ENCODE measurements at regions of chr15 and their contacts with region 1.

Region 1: DNA sequence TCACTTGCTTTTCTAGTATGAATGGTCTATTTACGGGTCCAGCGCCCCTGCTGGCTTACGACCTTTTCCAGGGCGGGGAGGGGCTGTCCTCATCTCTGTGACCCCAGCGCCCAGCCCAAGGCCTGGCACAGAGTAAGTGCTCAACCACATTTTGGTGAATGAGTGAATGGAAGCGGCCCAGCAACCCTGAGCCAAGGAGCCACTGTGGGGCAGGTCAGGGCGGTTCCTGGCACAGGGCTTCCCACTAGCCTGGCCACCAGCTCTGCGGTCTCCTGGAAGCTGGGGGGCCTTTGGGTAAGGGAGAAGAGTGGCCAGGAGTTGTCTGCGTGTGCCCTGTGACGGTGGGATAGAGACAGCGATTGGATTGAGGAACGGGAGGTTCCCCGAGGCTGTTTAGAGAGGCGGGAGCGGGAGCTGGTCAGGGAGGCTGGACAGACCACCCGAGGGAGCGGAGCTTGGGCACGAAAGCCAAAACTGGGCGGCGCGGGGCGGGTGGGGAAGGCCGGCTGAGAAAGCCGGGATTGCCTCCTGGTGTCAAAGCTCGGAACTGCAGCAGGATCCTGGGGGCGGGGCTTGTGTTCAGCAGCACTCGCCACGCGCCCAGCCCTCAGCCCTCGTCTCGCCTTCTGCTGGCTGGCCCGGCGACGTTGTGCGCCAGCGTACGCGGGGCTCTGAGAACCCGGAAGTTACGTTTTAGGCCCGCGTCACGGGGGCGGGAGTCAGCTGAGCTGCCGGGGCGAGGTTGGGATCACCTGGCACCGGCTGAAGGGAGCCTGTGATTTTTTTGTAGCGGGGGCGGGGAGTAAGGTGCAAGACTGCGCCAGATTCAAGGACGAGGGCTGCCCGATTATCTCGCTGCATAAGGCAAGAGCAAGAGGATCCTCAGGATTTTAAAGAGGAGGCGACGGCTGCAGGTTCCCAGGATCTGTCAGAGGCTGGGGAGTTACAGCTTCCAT is at the start of gene VPS18:
- DNase-seq: peak; percentile 99
- ATAC-seq: peak; percentile 92
- H3K4me3 ChIP-seq: peak within 1 kb of the TSS; percentile 87
- H3K27ac ChIP-seq: peak within 1 kb of the TSS; percentile 81
- H3K4me1 ChIP-seq: peaks cover 16% of the 10 kb centered on the region
- H3K27me3 ChIP-seq: no peaks in the 10 kb centered on the region
- CTCF ChIP-seq: peak; percentile 74
- total RNA-seq, gene VPS18: 37.6 and 39.5 TPM in 2 replicates

Region 2: GRCh38 chr15:40593588-40594428 is 300.2 kb before region 1 on chr15 and contains the start of gene KNL1:
- CTCF ChIA-PET with region 1: no interaction called
- POLR2A ChIA-PET with region 1: no interaction called
- intact Hi-C with region 1: loop called (anchors 10 kb)
- DNase-seq: peak; percentile 97
- ATAC-seq: peak; percentile 74
- H3K4me3 ChIP-seq: peak within 1 kb of the TSS; percentile 98
- H3K27ac ChIP-seq: peak within 1 kb of the TSS; percentile 85
- H3K4me1 ChIP-seq: peaks cover 17% of the 10 kb centered on the region; the same call in 1 of the 2 replicates
- H3K27me3 ChIP-seq: no peaks in the 10 kb centered on the region
- CTCF ChIP-seq: no peak
- total RNA-seq, gene KNL1: 33.5 and 33.8 TPM in 2 replicates

Region 3: GRCh38 chr15:40694688-40695468 is 199.1 kb before region 1 on chr15 and contains the start of gene RAD51:
- CTCF ChIA-PET with region 1: interaction called, 11 read pairs
- POLR2A ChIA-PET with region 1: no interaction called
- intact Hi-C with region 1: no loop called
- DNase-seq: peak; percentile 94
- ATAC-seq: peak; percentile 90
- H3K4me3 ChIP-seq: peak within 1 kb of the TSS; percentile 77
- H3K27ac ChIP-seq: peak within 1 kb of the TSS; percentile 90
- H3K4me1 ChIP-seq: peaks cover 10% of the 10 kb centered on the region; the same call in 1 of the 2 replicates
- H3K27me3 ChIP-seq: no peaks in the 10 kb centered on the region
- CTCF ChIP-seq: no peak
- total RNA-seq, gene RAD51: 17.3 and 21.9 TPM in 2 replicates

Region 4: GRCh38 chr15:40776522-40777137 is 117.4 kb before region 1 on chr15:
- CTCF ChIA-PET with region 1: interaction called, 10 read pairs
- POLR2A ChIA-PET with region 1: no interaction called
- intact Hi-C with region 1: no loop called
- DNase-seq: peak; percentile 93
- ATAC-seq: peak; percentile 100
- H3K4me3 ChIP-seq: no peak overlapping the region
- H3K27ac ChIP-seq: peak overlapping the region; percentile 66
- H3K4me1 ChIP-seq: peaks cover 17% of the 10 kb centered on the region
- H3K27me3 ChIP-seq: no peaks in the 10 kb centered on the region
- CTCF ChIP-seq: no peak

Region 5: GRCh38 chr15:40857601-40858341 is 36.2 kb before region 1 on chr15:
- CTCF ChIA-PET with region 1: interaction called, 80 read pairs
- POLR2A ChIA-PET with region 1: interaction called, 3 read pairs
- intact Hi-C with region 1: loop called (anchors 1 kb)
- DNase-seq: peak; percentile 97
- ATAC-seq: peak; percentile 77
- H3K4me3 ChIP-seq: no peak overlapping the region
- H3K27ac ChIP-seq: peak overlapping the region; percentile 94
- H3K4me1 ChIP-seq: peaks cover 39% of the 10 kb centered on the region
- H3K27me3 ChIP-seq: no peaks in the 10 kb centered on the region
- CTCF ChIP-seq: peak; percentile 96

Region 6: GRCh38 chr15:40928821-40929659 is 35.0 kb after region 1 on chr15 and contains the start of gene DLL4:
- CTCF ChIA-PET with region 1: no interaction called
- POLR2A ChIA-PET with region 1: no interaction called
- intact Hi-C with region 1: no loop called
- DNase-seq: peak; percentile 77
- ATAC-seq: peak; percentile 49
- H3K4me3 ChIP-seq: peak within 1 kb of the TSS; percentile 76
- H3K27ac ChIP-seq: no peak within 1 kb of the TSS
- H3K4me1 ChIP-seq: peaks cover 45% of the 10 kb centered on the region
- H3K27me3 ChIP-seq: peaks cover 25% of the 10 kb centered on the region
- CTCF ChIP-seq: no peak
- total RNA-seq, gene DLL4: 2.2 and 2.9 TPM in 2 replicates

Region 7: DNA sequence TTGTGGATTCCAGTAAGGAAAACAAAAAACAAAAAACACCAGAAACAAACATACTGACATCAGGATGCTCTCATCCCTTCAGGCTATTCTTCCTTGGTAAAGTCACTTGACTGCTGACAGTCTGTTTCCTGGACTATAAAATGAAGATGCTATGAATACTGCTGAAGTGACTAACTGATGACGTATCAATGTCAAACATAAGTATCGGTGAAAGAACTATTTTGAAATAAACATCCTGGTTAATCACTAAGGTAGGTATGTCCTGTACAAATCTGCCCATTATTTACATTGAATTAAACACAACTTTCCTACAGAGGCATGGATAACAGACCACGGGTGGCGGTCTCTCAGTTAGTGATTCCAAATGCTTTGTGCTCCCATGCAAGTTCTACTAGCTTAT is 105.2 kb after region 1 on chr15:
- CTCF ChIA-PET with region 1: no interaction called
- POLR2A ChIA-PET with region 1: no interaction called
- intact Hi-C with region 1: no loop called
- DNase-seq: peak; percentile 96
- ATAC-seq: peak; percentile 84
- H3K4me3 ChIP-seq: 0 out of 2 replicates have a peak overlapping the region, but pooled peaks have one; percentile 4
- H3K27ac ChIP-seq: peak overlapping the region; percentile 95
- H3K4me1 ChIP-seq: peaks cover 43% of the 10 kb centered on the region
- H3K27me3 ChIP-seq: no peaks in the 10 kb centered on the region
- CTCF ChIP-seq: no peak

Region 8: GRCh38 chr15:41354371-41354770 is 460.4 kb after region 1 on chr15:
- CTCF ChIA-PET with region 1: no interaction called
- POLR2A ChIA-PET with region 1: no interaction called
- intact Hi-C with region 1: no loop called
- DNase-seq: no peak
- ATAC-seq: no peak
- H3K4me3 ChIP-seq: no peak overlapping the region
- H3K27ac ChIP-seq: no peak overlapping the region
- H3K4me1 ChIP-seq: no peaks in the 10 kb centered on the region
- H3K27me3 ChIP-seq: no peaks in the 10 kb centered on the region
- CTCF ChIP-seq: no peak

Region 9: GRCh38 chr15:42171122-42171521 is 1277.1 kb after region 1 on chr15:
- CTCF ChIA-PET with region 1: no interaction called
- POLR2A ChIA-PET with region 1: no interaction called
- intact Hi-C with region 1: no loop called
- DNase-seq: no peak
- ATAC-seq: no peak
- H3K4me3 ChIP-seq: no peak overlapping the region
- H3K27ac ChIP-seq: no peak overlapping the region
- H3K4me1 ChIP-seq: no peaks in the 10 kb centered on the region
- H3K27me3 ChIP-seq: no peaks in the 10 kb centered on the region
- CTCF ChIP-seq: no peak

Measured in PC-3 (cell line).